ENCODE measurements at regions of chr17 and their contacts with region 1.

Region 1: DNA sequence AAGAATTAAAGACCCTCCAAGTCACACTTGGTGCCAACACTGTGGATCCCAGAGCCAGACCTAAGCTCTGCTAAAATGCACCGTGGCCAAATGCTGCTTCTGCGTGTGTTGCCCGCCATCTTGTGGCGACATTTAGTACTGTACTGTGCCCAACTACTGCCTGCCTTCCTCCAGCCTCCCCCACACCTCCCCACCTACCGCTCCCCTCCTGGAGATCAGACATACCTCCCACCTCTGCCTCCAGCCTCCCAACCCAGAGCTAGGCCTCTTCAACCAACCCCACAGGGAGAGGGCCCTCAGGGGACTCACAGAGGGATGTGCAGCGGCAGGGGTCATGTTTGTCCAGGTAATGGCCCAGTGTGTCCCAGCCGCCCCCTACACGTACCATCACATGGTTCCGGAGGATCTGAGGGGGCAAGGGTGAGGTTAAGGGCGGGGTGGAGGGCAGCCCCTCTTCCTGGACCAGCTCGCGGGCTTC is 5.5 kb downstream of the GAS2L2 start:
- DNase-seq: peak; percentile 55
- H3K4me3 ChIP-seq: no peak overlapping the region
- H3K27ac ChIP-seq: no peak overlapping the region
- H3K27me3 ChIP-seq: peaks cover 53% of the 10 kb centered on the region
- CTCF ChIP-seq: peak; percentile 83

Region 2: DNA sequence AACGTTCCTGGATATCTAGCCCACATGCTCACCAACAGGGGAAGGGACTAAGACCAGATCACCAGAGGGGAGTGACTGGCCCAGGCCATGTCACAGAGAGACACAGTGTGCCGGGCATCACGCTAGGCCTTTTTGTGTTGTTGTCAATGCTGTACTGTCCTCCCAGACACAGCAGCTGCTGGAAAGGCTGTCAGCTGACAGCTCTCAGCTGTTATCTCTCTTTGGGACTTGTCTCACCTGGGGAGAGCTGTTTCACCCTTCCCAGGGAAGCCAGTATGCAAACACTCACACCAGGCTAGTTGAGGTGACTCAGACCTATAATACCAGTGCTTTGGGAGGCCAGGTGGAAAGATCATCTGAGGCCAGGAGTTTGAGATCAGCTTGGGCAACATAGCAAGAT is 580.5 kb before region 1 on chr17:
- CTCF ChIA-PET with region 1: no interaction called
- POLR2A ChIA-PET with region 1: no interaction called
- DNase-seq: no peak
- H3K4me3 ChIP-seq: no peak overlapping the region
- H3K27ac ChIP-seq: no peak overlapping the region
- H3K27me3 ChIP-seq: no peaks in the 10 kb centered on the region
- CTCF ChIP-seq: no peak

Region 3: DNA sequence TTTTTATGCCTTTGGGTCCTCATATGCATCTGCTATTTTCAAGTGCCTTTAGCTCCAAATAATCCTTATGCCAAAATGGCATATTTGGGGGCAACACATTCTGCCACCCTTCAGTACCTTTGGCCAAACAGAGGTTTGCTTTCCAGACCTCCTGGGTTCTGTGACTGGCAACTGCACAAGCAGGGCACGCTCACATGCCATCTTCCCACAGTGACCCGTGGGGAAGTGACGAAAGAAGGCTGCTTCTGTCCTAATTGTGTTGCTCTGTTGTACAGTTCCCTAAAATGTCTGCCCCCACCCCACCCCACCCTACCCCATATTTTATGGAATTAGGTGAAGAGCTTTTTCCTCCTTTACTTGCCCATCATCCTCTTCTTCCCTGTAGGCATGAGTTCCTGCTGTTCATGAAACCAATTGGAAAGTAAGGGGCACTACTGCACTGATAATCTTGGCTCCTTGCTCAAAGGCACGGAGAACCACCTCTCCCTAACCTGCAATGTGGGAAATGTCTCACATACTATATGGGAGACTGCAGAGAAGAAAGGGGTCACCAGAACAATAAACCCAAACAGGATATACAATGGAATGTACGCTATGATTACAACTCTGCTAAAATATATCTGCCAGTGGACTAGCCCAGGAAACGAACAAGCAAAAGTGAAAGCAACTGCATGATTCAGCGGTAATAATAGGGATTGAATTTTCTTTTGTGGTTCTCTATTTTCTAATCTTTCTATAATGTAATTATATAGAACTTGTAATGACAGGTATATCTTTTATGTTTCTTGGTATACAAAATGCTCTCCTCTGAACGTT is 206.8 kb before region 1 on chr17:
- CTCF ChIA-PET with region 1: interaction called, 21 read pairs
- POLR2A ChIA-PET with region 1: no interaction called
- DNase-seq: no peak
- H3K4me3 ChIP-seq: peak overlapping the region; percentile 37
- H3K27ac ChIP-seq: no peak overlapping the region
- H3K27me3 ChIP-seq: no peaks in the 10 kb centered on the region
- CTCF ChIP-seq: 0 out of 2 replicates have a peak, but pooled peaks have one; percentile 8

Region 4: DNA sequence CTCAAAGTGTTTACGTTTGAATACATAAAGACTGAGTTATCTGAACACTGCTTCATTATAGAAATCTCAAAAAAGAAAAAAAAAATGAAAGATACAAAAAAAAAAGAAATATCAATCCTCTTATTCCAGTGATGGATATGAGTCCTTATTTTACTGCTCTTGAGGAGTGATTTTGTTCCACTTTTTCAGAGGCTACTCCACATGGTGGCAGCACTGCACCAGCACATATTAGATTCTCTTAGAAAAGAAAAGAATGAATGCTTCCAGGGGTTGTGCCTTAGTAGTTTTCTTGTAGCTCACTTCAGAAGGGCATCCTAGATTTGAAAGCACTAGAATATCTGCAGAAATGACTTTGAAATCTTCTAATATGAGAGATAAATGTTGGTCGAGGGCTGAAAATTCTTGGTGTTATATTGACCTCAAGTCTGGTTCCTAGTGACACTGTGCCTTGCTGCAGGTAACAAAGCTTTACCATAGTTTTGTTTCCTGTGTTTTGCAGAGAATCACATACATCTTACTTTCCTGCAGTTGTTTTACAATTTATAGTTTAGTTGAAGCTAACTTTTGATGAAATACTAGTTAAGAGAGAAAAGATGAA is 134.6 kb before region 1 on chr17:
- CTCF ChIA-PET with region 1: interaction called, 357 read pairs
- POLR2A ChIA-PET with region 1: interaction called, 3 read pairs
- DNase-seq: no peak
- H3K4me3 ChIP-seq: no peak overlapping the region
- H3K27ac ChIP-seq: no peak overlapping the region
- H3K27me3 ChIP-seq: no peaks in the 10 kb centered on the region
- CTCF ChIP-seq: peak; percentile 71

Region 5: GRCh38 chr17:35660902-35661301 is 86.7 kb before region 1 on chr17:
- CTCF ChIA-PET with region 1: interaction called, 12 read pairs
- POLR2A ChIA-PET with region 1: no interaction called
- DNase-seq: no peak
- H3K4me3 ChIP-seq: no peak overlapping the region
- H3K27ac ChIP-seq: no peak overlapping the region
- H3K27me3 ChIP-seq: no peaks in the 10 kb centered on the region
- CTCF ChIP-seq: no peak

Region 6: GRCh38 chr17:35716897-35717465 is 30.6 kb before region 1 on chr17:
- CTCF ChIA-PET with region 1: interaction called, 11 read pairs
- POLR2A ChIA-PET with region 1: no interaction called
- DNase-seq: no peak
- H3K4me3 ChIP-seq: no peak overlapping the region
- H3K27ac ChIP-seq: no peak overlapping the region
- H3K27me3 ChIP-seq: no peaks in the 10 kb centered on the region
- CTCF ChIP-seq: no peak

Region 7: GRCh38 chr17:35764123-35764991 is 16.8 kb after region 1 on chr17:
- CTCF ChIA-PET with region 1: interaction called, 17 read pairs
- POLR2A ChIA-PET with region 1: no interaction called
- DNase-seq: no peak
- H3K4me3 ChIP-seq: peak overlapping the region; percentile 49
- H3K27ac ChIP-seq: no peak overlapping the region
- H3K27me3 ChIP-seq: peaks cover 34% of the 10 kb centered on the region
- CTCF ChIP-seq: peak; percentile 85

Region 8: DNA sequence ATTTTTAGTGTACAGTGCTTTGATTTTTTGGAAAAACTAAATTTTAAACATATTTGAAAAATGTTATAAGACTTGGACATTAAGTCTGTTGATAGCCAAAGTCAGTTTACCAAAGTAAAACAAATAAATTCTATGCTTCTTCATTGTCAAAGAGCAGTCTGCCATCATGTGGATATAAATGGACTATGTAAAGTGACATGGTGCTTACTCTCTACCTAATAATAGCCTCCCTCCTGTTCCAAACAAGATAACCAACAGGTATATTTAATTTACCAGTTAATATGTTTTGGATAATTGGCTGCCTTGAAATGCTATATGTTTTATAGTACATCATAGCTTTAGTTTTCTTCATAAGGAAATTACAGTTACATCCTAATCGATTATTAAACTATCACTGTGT is 77.6 kb after region 1 on chr17:
- CTCF ChIA-PET with region 1: no interaction called
- POLR2A ChIA-PET with region 1: no interaction called
- DNase-seq: no peak
- H3K4me3 ChIP-seq: no peak overlapping the region
- H3K27ac ChIP-seq: no peak overlapping the region
- H3K27me3 ChIP-seq: no peaks in the 10 kb centered on the region
- CTCF ChIP-seq: no peak

Measured in AG04450 (cell line).